Posterior vena cava (tissue), 2 donors: ENCODE measurements at regions of chr5 and their contacts with region 1.

Region 1: GRCh38 chr5:141691867-141692532 is 10.0 kb upstream of the ARAP3 start:
- DNase-seq: peak; percentile 96

Region 2: DNA sequence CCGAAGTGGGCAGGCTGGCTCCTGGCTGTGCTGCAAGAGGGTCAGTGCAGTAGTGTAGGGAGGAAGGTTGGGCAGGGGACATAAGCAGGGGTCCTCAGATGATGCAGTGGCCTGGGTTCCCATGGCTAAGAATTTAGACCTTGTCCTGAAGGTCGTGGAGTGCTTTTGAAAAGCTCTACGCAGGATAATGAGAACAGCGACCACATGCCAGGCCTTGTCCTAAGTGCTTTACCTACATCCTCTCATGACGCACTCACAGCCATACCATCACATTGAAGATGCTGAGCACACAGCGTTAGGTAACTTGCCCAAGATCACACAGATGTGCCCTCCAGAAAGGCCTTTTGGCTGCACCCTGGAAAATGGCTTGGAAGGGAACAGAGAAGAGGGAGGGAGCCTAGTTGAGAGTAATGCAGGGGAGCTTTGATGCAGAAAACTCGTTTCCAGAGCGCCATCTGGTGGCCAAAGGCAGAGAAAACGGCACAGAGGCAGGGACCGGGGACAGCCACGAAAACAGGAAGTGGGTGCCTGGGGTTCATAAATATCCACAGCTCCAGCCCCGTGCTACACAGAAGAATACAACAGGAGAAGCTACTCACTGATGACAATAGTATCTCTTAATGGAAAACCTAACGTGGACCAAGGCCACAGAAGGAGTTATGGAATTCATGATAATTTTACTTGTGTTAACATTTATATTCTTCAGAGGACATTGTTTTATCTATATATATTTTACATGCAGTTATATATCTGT is 268.6 kb after region 1 on chr5:
- intact Hi-C with region 1: loop called (anchors 1 to 2 kb)
- DNase-seq: peak; percentile 96